Heart left ventricle (tissue), 16 donors: ENCODE measurements at regions of chr16 and their contacts with region 1.

Region 1: GRCh38 chr16:3305109-3306068 is at the starts of genes TIGD7 and ZNF75A:
- DNase-seq: peak; percentile 89 to 93 (median 92)
- ATAC-seq: peak; percentile 98 to 100 (median 99)
- H3K4me3 ChIP-seq: peak within 1 kb of the TSS; percentile 52 to 92 (median 73)
- H3K27ac ChIP-seq: peak within 1 kb of the TSS; percentile 74 to 98 (median 94)
- H3K4me1 ChIP-seq: peaks cover 0 to 25% (median 18%) of the 10 kb centered on the region in 12 donors
- H3K27me3 ChIP-seq: no peaks in the 10 kb centered on the region
- CTCF ChIP-seq: peak in 7 of 12 donors; percentile 5 to 45 (median 23)
- POLR2A ChIP-seq: peak in 1 of 2 donors; percentile 80
- total RNA-seq, gene TIGD7: 4.6 to 10.4 (median 8.2) TPM
- total RNA-seq, gene ZNF75A: 13.3 to 27.3 (median 18.1) TPM

Region 2: DNA sequence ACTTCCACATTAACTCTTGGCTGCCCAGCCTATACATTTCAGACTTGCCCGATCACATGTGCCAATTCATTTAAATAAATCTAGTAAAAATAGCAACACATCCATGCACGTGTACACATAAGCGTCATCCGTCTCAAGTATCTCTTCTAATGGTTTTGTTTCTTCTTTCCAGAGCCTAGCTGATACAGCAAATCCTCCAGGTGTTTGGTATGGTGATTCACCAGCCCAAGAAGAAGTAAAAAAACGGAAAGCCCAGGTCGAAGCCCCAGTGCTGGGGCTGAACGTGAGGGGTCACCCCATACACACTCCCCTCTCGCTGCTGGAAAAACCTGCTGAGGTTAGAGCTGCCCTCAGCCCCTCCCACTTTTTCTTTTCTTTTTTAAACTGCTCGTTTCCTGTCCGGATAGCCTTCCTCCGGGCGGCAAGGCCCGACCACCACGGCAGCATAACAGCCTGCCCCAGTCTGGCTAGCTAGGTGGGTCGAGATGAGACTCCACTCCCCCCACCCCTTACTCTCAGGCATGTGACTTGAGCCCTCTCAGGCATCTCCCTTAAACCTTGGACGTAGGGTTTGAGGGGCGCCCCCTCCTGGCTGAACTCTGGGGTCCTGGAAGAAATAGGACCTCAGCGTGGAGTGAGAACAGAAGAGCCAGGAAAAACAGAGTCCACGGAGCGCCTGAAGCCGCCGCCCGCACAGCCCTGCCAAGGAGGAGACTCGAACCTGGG is 131.3 kb before region 1 on chr16:
- intact Hi-C with region 1: no loop called
- DNase-seq: peak in 1 of 5 donors; percentile 37
- ATAC-seq: no peak
- H3K4me3 ChIP-seq: no peak overlapping the region
- H3K27ac ChIP-seq: no peak overlapping the region
- H3K4me1 ChIP-seq: peaks cover 0 to 41% (median 15%) of the 10 kb centered on the region in 12 donors
- H3K27me3 ChIP-seq: peaks cover 57 to 100% (median 94%) of the 10 kb centered on the region in 9 donors
- CTCF ChIP-seq: no peak
- POLR2A ChIP-seq: no peak

Region 3: GRCh38 chr16:3364774-3365427 is 59.5 kb after region 1 on chr16:
- intact Hi-C with region 1: loop called in 3 of 10 experiments (anchors 2 to 10 kb)
- DNase-seq: peak; percentile 87 to 97 (median 92)
- ATAC-seq: peak; percentile 99 to 100 (median 99)
- H3K4me3 ChIP-seq: peak overlapping the region; percentile 40 to 90 (median 62)
- H3K27ac ChIP-seq: peak overlapping the region; percentile 79 to 94 (median 88)
- H3K4me1 ChIP-seq: peaks cover 0 to 8% (median 0%) of the 10 kb centered on the region in 12 donors
- H3K27me3 ChIP-seq: peaks cover 0 to 9% (median 0%) of the 10 kb centered on the region in 9 donors
- CTCF ChIP-seq: no peak
- POLR2A ChIP-seq: peak in 1 of 2 donors; percentile 41

Region 4: GRCh38 chr16:3383045-3383448 is 77.7 kb after region 1 on chr16:
- intact Hi-C with region 1: loop called in 3 of 10 experiments (anchors 5 to 10 kb)
- DNase-seq: no peak
- ATAC-seq: no peak
- H3K4me3 ChIP-seq: no peak overlapping the region
- H3K27ac ChIP-seq: no peak overlapping the region
- H3K4me1 ChIP-seq: no peaks in the 10 kb centered on the region
- H3K27me3 ChIP-seq: no peaks in the 10 kb centered on the region
- CTCF ChIP-seq: no peak
- POLR2A ChIP-seq: no peak

Region 5: GRCh38 chr16:3457434-3458252 is 152.3 kb after region 1 on chr16:
- intact Hi-C with region 1: loop called in 5 of 10 experiments (anchors 1 to 10 kb)
- DNase-seq: peak; percentile 91 to 95 (median 93)
- ATAC-seq: peak; percentile 69 to 94 (median 90)
- H3K4me3 ChIP-seq: peak overlapping the region; percentile 74 to 99 (median 80)
- H3K27ac ChIP-seq: peak overlapping the region; percentile 94 to 99 (median 98)
- H3K4me1 ChIP-seq: peaks cover 16 to 64% (median 57%) of the 10 kb centered on the region in 12 donors
- H3K27me3 ChIP-seq: no peaks in the 10 kb centered on the region
- CTCF ChIP-seq: peak in 11 of 12 donors; percentile 24 to 64 (median 50)
- POLR2A ChIP-seq: peak in 1 of 2 donors; percentile 56

Region 6: DNA sequence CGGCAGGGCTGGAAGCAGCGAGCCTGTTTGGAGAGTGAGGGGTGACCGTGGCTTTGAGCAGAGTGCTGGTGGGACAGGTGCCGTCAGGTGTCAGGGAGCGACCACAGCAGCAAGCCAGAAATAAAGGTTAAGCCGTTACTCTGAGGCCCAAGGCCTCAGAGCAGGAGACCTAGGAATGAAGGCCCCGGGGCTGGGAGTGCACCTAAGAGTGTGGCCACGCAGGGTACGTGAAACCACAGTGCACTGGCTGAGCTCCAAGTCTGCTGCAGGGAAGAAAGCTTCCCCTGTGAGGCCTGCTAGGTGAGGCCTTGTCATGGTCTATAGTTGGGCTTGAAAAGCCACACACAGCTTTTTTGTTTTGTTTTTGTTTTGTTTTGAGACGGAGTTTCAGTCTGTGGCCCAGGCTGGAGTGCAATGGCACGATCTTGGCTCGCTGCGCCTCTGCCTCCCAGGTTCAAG is 204.1 kb after region 1 on chr16:
- intact Hi-C with region 1: loop called in 2 of 10 experiments (anchors 10 kb)
- DNase-seq: no peak
- ATAC-seq: no peak
- H3K4me3 ChIP-seq: no peak overlapping the region
- H3K27ac ChIP-seq: peak overlapping the region in 1 of 12 donors; percentile 42
- H3K4me1 ChIP-seq: peaks cover 0 to 10% (median 0%) of the 10 kb centered on the region in 12 donors
- H3K27me3 ChIP-seq: no peaks in the 10 kb centered on the region
- CTCF ChIP-seq: no peak
- POLR2A ChIP-seq: no peak